ENCODE measurements at regions of chr11 and their contacts with region 1.

Region 1: DNA sequence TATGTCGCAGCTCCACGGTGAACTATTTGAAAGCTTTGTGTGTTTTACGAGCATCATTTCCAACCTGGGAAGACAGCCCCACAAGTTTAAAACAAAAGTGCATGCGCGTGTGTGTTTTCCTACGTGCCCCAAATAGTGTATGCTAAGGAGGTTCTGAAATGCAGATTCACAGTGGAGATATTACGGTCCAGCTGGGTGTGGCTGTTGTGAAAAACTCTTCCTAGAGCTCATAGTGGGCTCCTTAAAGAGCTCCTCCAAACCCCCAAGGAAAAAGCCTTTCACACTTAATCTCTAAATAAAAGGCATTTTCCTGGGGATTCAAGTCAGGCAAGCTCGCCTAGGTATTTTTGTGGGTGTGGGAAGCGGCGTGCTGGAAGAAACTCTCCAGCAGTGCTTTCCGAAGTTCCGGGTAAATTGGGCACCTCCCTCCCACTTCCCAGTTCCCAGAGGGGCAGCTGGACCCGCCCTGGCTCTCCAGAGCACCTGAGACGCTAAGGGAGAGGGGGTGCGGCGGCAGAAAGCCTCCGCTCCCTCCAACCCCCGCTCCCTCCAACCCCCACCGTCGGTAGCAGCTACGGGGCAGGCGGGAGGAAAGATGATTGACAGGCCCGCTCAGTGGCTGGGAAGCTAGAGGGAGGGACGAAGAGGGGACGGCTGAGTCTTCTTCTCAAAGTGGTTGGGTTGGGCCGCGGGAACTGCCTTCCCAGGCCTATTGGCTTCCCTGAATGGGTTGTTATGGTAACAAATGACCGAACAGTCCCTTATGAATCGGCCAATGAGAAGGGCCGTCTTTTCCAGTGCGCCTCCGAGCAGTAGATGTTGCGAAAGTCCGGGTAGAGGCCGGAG is 558 bp upstream of the PCF11 start:
- DNase-seq: peak in 1 of 3 donors; percentile 99
- ATAC-seq: peak; percentile 91
- H3K4me3 ChIP-seq: peak overlapping the region; percentile 89
- H3K4me1 ChIP-seq: no peaks in the 10 kb centered on the region
- CTCF ChIP-seq: no peak

Region 2: GRCh38 chr11:83078269-83078668 is 78.1 kb before region 1 on chr11:
- intact Hi-C with region 1: loop called in 1 of 2 experiments (anchors 5 kb)
- DNase-seq: no peak
- ATAC-seq: no peak
- H3K4me3 ChIP-seq: no peak overlapping the region
- H3K4me1 ChIP-seq: peaks cover 2% of the 10 kb centered on the region
- CTCF ChIP-seq: no peak

Measured in mucosa of descending colon (tissue), 3 donors.